ENCODE measurements at regions of chr2 and their contacts with region 1.

Region 1: GRCh38 chr2:136785215-136785614 is 19.9 kb downstream of the THSD7B start:
- DNase-seq: no peak
- H3K4me3 ChIP-seq: no peak overlapping the region
- H3K27ac ChIP-seq: no peak overlapping the region
- H3K4me1 ChIP-seq: no peaks in the 10 kb centered on the region
- H3K27me3 ChIP-seq: no peaks in the 10 kb centered on the region
- CTCF ChIP-seq: no peak
- POLR2A ChIP-seq: no peak

Region 2: GRCh38 chr2:136764452-136765255 is 20.6 kb before region 1 on chr2:
- CTCF ChIA-PET with region 1: no interaction called
- POLR2A ChIA-PET with region 1: no interaction called
- dilution Hi-C with region 1: no loop called
- intact Hi-C with region 1: loop called (anchors 1 kb)
- DNase-seq: no peak
- H3K4me3 ChIP-seq: no peak overlapping the region
- H3K27ac ChIP-seq: no peak overlapping the region
- H3K4me1 ChIP-seq: no peaks in the 10 kb centered on the region
- H3K27me3 ChIP-seq: peaks cover 9 to 18% of the 10 kb centered on the region in 2 experiments
- CTCF ChIP-seq: no peak
- POLR2A ChIP-seq: no peak

Measured in endothelial cell of umbilical vein (primary cell).